ENCODE measurements at regions of chr9 and their contacts with region 1.

Region 1: GRCh38 chr9:105842023-105842644 is 147.8 kb downstream of the TMEM38B start:
- DNase-seq: peak; percentile 40 to 66 (median 54)
- H3K4me3 ChIP-seq: no peak overlapping the region
- H3K27ac ChIP-seq: no peak overlapping the region
- H3K4me1 ChIP-seq: no peaks in the 10 kb centered on the region
- H3K27me3 ChIP-seq: no peaks in the 10 kb centered on the region

Region 2: GRCh38 chr9:105858006-105858690 is 16.0 kb after region 1 on chr9:
- CTCF ChIA-PET with region 1: interaction called, 28 read pairs
- POLR2A ChIA-PET with region 1: no interaction called
- DNase-seq: peak in 2 of 3 donors; percentile 38 to 52
- H3K4me3 ChIP-seq: peak overlapping the region in 1 of 7 experiments; percentile 6
- H3K27ac ChIP-seq: no peak overlapping the region
- H3K4me1 ChIP-seq: peaks cover 6 to 27% (median 18%) of the 10 kb centered on the region in 4 experiments
- H3K27me3 ChIP-seq: no peaks in the 10 kb centered on the region

Region 3: GRCh38 chr9:105864248-105864898 is 22.2 kb after region 1 on chr9:
- CTCF ChIA-PET with region 1: interaction called, 11 read pairs
- POLR2A ChIA-PET with region 1: no interaction called
- DNase-seq: no peak
- H3K4me3 ChIP-seq: no peak overlapping the region
- H3K27ac ChIP-seq: no peak overlapping the region
- H3K4me1 ChIP-seq: peaks cover 0 to 22% (median 6%) of the 10 kb centered on the region in 4 experiments
- H3K27me3 ChIP-seq: no peaks in the 10 kb centered on the region

Region 4: DNA sequence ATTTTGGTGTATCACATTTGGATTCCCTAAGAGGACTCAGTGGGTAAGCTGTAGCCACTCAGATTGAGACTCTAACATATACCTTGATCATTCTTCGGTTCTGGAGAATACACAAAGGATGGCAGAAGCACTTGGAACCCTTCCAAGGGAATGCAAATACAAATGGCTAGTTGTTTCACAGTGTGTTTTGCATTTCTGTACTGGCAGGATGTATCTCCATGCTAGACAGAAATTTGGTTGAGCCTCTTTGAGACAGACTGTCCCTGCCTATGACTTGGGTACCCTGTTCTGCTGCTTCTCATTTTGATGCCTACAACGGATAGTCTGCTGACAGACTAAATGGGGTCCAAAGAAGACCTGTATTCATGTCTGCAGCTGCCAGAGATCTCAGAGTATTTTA is 125.7 kb after region 1 on chr9:
- CTCF ChIA-PET with region 1: no interaction called
- POLR2A ChIA-PET with region 1: no interaction called
- DNase-seq: no peak
- H3K4me3 ChIP-seq: no peak overlapping the region
- H3K27ac ChIP-seq: no peak overlapping the region
- H3K4me1 ChIP-seq: peaks cover 0 to 6% (median 0%) of the 10 kb centered on the region in 4 experiments
- H3K27me3 ChIP-seq: no peaks in the 10 kb centered on the region